Cardiac septum (tissue), 1 donor: ENCODE measurements at regions of chr11 and their contacts with region 1.

Region 1: GRCh38 chr11:66268283-66268951 is at the start of gene RAB1B:
- DNase-seq: peak; percentile 100
- total RNA-seq, gene RAB1B: 124 TPM

Region 2: DNA sequence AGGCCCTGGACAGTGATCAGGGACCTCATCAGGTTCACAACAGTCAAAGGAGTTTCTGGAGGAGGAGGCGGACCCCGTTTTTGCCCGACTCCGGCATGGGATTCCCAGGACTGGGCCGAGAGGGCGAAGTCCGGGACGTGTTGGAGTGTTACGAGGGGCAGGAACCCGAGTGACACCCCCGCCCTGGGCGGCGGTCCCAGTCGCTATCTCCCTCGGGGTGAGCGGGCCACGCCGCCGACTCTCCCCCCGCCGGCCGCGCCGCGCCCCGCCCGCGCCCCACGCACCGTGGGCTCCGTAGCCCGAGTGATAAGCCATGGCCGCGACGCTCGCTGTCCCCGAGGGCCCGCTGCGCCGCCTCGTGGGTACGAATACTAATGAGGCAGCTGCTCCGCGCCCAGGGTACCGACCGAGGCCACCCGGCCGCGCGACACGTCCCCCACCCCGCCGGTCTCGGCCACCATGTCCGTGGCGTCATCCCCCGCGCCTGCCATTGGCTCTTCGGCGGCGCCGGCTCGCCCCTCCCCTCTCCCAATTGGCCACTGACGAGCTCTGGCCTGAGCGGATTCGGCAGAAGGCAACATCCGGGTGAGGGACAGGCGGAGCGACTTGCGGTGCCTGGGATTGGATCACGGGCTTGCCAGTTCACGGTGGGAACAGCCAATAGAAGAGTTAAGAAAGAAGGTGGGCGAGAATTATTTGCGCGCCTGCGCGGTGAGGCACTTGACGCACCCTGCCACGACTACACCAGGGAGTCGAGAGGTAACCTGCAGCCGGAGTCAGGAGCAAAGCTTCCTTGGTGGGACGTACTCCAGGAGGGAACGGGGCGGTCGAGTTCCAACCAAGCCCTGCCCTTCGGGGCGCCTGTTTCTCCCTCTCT is 20.5 kb after region 1 on chr11 and contains the start of gene YIF1A:
- intact Hi-C with region 1: loop called (anchors 2 kb)
- DNase-seq: peak; percentile 99
- total RNA-seq, gene YIF1A: 74.0 TPM